OCI-LY7 (cell line): ENCODE measurements at regions of chr16 and their contacts with region 1.

Region 1: GRCh38 chr16:81778861-81779535 is at the start of gene PLCG2:
- DNase-seq: peak; percentile 85
- H3K4me3 ChIP-seq: peak within 1 kb of the TSS; percentile 85
- H3K27ac ChIP-seq: peak within 1 kb of the TSS; percentile 92
- H3K4me1 ChIP-seq: peaks cover 85% of the 10 kb centered on the region
- CTCF ChIP-seq: no peak
- total RNA-seq, gene PLCG2: 196 and 198 TPM in 2 replicates

Region 2: GRCh38 chr16:81106811-81107503 is 672.0 kb before region 1 on chr16:
- CTCF ChIA-PET with region 1: no interaction called
- POLR2A ChIA-PET with region 1: no interaction called
- intact Hi-C with region 1: no loop called
- DNase-seq: no peak
- H3K4me3 ChIP-seq: no peak overlapping the region
- H3K27ac ChIP-seq: no peak overlapping the region
- H3K4me1 ChIP-seq: no peaks in the 10 kb centered on the region
- CTCF ChIP-seq: no peak

Region 3: GRCh38 chr16:81752225-81752875 is 26.6 kb before region 1 on chr16:
- CTCF ChIA-PET with region 1: interaction called, 3 read pairs
- POLR2A ChIA-PET with region 1: interaction called, 37 read pairs
- intact Hi-C with region 1: loop called (anchors 2 kb)
- DNase-seq: peak; percentile 89
- H3K4me3 ChIP-seq: peak overlapping the region; percentile 43
- H3K27ac ChIP-seq: peak overlapping the region; percentile 66
- H3K4me1 ChIP-seq: peaks cover 63% of the 10 kb centered on the region
- CTCF ChIP-seq: no peak

Region 4: DNA sequence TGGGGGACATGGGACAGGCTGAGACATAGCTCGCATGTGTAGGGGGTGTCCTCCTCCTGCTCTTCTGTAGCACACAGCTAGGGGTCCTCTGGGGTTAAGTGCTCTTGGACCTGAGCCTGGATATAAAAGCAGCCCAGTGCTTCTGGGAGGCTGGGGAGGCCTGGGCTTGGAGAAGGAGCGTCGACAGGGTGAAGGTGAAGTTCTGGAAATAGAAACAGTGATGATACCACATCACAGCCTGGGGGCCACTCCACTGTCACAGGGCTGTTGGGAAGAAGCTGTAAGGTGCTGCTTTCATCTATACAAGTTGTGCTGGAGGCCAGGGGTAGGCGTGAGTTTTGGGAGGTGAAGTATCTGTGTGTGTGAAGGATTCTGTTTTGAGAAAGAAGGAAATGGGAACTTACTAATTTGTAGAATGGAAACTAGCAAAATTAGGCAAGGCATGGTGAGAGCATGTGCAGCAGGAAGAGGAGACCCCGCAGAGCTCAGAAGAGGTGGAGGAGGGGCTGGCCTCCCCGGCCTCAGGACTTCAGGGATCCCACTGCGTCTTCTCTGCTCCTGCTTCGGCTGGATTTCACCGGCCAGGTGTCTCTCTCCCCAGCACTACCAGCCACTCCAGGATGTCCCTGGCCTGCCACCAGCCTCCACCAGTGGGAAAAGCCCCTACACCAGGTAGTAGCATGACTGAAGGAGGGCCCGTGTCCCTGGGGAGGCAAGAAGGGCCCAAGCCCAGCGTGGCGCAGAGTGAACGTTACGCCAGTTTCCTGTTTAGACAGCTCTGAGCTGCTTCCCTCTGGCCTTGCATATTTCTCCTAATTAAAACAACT is 19.5 kb after region 1 on chr16:
- CTCF ChIA-PET with region 1: interaction called, 3 read pairs
- POLR2A ChIA-PET with region 1: interaction called, 11 read pairs
- intact Hi-C with region 1: no loop called
- DNase-seq: peak; percentile 96
- H3K4me3 ChIP-seq: peak overlapping the region; percentile 51
- H3K27ac ChIP-seq: peak overlapping the region; percentile 95
- H3K4me1 ChIP-seq: peaks cover 94% of the 10 kb centered on the region
- CTCF ChIP-seq: peak; percentile 57

Region 5: GRCh38 chr16:81817789-81818567 is 39.0 kb after region 1 on chr16:
- CTCF ChIA-PET with region 1: interaction called, 3 read pairs
- POLR2A ChIA-PET with region 1: interaction called, 57 read pairs
- intact Hi-C with region 1: loop called (anchors 2 kb)
- DNase-seq: peak; percentile 88
- H3K4me3 ChIP-seq: peak overlapping the region; percentile 64
- H3K27ac ChIP-seq: peak overlapping the region; percentile 97
- H3K4me1 ChIP-seq: peaks cover 95% of the 10 kb centered on the region
- CTCF ChIP-seq: no peak

Region 6: DNA sequence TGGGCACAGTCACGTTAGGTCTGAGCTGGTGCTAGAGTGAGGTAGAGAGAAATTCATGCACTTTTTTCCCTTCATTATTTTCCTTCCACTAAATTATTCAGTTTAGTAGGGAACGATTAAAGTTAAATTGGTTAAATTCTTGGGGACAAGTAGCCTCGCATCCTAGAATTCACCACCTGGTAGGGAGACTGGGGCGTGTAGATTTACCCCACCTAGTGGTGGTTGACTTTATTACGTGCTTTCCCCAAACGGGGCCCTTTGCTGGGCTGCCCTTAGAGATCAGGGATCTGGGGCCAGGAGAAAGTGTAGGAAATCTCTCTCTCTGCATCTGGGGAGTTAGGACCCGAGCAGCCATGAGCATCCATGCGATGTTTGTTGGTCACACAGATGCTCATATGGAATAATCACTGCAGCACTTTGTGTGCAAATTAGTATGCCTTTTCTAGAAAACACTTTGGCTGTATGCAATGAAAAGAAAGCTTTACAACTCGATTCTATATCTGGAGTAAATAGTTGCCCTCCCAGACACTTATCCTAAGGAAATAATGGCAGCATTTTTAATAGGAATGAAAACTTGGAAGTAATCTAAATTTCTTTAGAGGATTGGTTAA is 107.1 kb after region 1 on chr16:
- CTCF ChIA-PET with region 1: no interaction called
- POLR2A ChIA-PET with region 1: no interaction called
- intact Hi-C with region 1: loop called (anchors 5 kb)
- DNase-seq: peak; percentile 67
- H3K4me3 ChIP-seq: no peak overlapping the region
- H3K27ac ChIP-seq: peak overlapping the region; percentile 7
- H3K4me1 ChIP-seq: peaks cover 5% of the 10 kb centered on the region
- CTCF ChIP-seq: peak; percentile 93